ENCODE measurements at regions of chr4 and their contacts with region 1.

Region 1: DNA sequence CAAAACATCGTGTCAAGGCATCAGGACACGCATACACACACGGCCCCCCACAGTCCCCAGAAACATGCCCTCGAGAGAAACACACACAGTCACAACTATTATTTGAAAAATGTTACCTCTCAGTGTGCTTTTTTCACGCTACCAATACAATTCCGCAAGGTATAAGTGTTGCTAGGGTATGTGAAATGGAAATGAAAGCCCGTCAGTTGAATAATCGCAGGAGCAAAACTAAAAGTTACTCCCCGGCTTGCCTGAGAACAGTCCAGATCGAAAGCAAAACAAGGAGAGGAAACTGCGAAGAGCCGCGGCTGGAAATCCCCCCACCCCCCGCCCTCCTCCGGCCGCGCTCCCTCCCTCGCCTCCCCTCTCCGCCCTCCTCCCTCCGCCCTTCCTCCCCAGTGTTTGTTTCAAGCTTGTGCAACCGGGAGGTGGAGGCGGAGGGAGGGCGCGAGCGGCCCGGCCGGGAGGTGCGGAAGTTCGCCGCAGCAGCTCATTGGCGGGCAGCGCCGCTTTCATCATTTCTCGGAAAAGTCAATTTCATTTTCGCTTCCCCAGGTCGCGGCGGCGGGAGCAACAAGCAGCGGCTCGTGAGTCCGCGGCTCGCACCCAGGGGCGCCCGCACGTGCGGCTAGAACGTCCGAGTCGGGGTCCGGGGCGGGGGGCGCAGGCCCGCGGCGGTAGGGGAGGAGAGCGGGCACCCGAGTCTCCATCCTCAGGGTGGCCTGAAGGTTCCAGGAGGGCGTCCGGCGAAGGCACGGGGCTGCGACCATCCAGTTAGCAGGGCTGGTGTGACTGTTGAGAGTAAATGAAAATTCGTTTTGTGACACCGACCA is at the start of gene IRF2:
- DNase-seq: peak; percentile 98
- ATAC-seq: peak; percentile 82
- H3K4me3 ChIP-seq: peak within 1 kb of the TSS; percentile 92 to 100 (median 97)
- H3K4me3 Mint-ChIP-seq: peak within 1 kb of the TSS; percentile 96
- H3K27ac ChIP-seq: peak within 1 kb of the TSS; percentile 91 to 96
- H3K27ac Mint-ChIP-seq: peak within 1 kb of the TSS; percentile 95
- H3K4me1 ChIP-seq: peaks cover 53 to 54% of the 10 kb centered on the region in 2 donors
- H3K4me1 Mint-ChIP-seq: peaks cover 66% of the 10 kb centered on the region
- H3K27me3 ChIP-seq: no peaks in the 10 kb centered on the region
- H3K27me3 Mint-ChIP-seq: no peaks in the 10 kb centered on the region
- CTCF ChIP-seq: no peak
- total RNA-seq, gene IRF2: 68.2 and 68.4 TPM in 2 replicates

Region 2: DNA sequence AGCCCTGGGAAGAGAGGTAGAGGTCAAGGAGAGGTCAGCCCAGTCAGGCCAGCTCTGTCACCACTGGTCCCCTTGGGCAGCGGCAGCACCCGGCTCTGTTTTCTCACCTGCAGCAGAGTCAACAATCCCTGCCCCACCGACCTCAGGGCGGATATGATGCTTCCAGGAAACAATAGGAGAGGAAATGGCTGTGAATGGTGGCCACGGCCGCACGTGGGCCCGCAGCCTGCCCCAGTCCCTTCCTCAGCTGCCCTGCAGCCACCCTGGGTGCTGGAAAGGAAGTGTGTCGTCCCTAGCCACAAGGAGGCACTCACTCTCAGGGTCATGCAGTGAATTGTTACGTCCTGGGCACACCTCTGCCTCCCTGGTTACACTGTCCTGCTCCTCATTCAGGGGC is 164.3 kb before region 1 on chr4:
- CTCF ChIA-PET with region 1: interaction called, 5 read pairs
- POLR2A ChIA-PET with region 1: interaction called, 4 read pairs
- intact Hi-C with region 1: loop called (anchors 2 kb)
- DNase-seq: peak; percentile 71
- ATAC-seq: peak; percentile 21
- H3K4me3 ChIP-seq: no peak overlapping the region
- H3K4me3 Mint-ChIP-seq: peak overlapping the region; percentile 29
- H3K27ac ChIP-seq: no peak overlapping the region
- H3K27ac Mint-ChIP-seq: peak overlapping the region; percentile 56
- H3K4me1 ChIP-seq: peaks cover 46 to 48% of the 10 kb centered on the region in 2 donors
- H3K4me1 Mint-ChIP-seq: peaks cover 60% of the 10 kb centered on the region
- H3K27me3 ChIP-seq: no peaks in the 10 kb centered on the region
- H3K27me3 Mint-ChIP-seq: no peaks in the 10 kb centered on the region
- CTCF ChIP-seq: peak; percentile 58

Region 3: DNA sequence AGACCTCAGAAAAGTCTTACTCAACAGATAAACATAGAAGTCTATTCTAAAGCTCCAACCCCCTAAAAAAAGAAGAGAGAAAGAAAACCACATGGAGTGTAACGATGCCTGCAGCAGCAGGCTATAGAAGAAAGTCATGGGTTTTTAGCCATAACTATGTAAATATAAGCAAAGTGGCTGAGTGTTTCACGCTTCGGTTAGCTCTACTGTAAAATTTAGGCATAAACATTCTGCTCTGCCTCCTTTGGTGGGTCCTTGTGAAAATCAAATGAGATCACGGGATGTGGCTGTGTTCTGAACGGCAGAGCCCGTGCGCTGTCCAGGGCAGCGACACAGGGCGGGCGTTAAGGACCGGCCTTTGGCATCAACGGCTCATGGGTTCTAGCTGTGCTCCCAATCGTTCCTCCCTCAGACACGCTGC is 78.5 kb before region 1 on chr4:
- CTCF ChIA-PET with region 1: interaction called, 8 read pairs
- POLR2A ChIA-PET with region 1: no interaction called
- intact Hi-C with region 1: loop called (anchors 2 kb)
- DNase-seq: peak; percentile 87
- ATAC-seq: peak; percentile 90
- H3K4me3 ChIP-seq: peak overlapping the region in 4 of 5 experiments; percentile 10 to 44 (median 15)
- H3K4me3 Mint-ChIP-seq: peak overlapping the region; percentile 89
- H3K27ac ChIP-seq: peak overlapping the region; percentile 9 to 79
- H3K27ac Mint-ChIP-seq: peak overlapping the region; percentile 95
- H3K4me1 ChIP-seq: peaks cover 27 to 35% of the 10 kb centered on the region in 2 donors
- H3K4me1 Mint-ChIP-seq: peaks cover 44% of the 10 kb centered on the region
- H3K27me3 ChIP-seq: no peaks in the 10 kb centered on the region
- H3K27me3 Mint-ChIP-seq: no peaks in the 10 kb centered on the region
- CTCF ChIP-seq: peak; percentile 15

Region 4: GRCh38 chr4:184444953-184445309 is 29.5 kb before region 1 on chr4:
- CTCF ChIA-PET with region 1: interaction called, 5 read pairs
- POLR2A ChIA-PET with region 1: no interaction called
- intact Hi-C with region 1: loop called (anchors 2 kb)
- DNase-seq: peak; percentile 75
- ATAC-seq: peak; percentile 90
- H3K4me3 ChIP-seq: no peak overlapping the region
- H3K4me3 Mint-ChIP-seq: peak overlapping the region; percentile 58
- H3K27ac ChIP-seq: peak overlapping the region; percentile 25 to 62
- H3K27ac Mint-ChIP-seq: peak overlapping the region; percentile 47
- H3K4me1 ChIP-seq: peaks cover 80% of the 10 kb centered on the region in 2 donors
- H3K4me1 Mint-ChIP-seq: peaks cover 91% of the 10 kb centered on the region
- H3K27me3 ChIP-seq: no peaks in the 10 kb centered on the region
- H3K27me3 Mint-ChIP-seq: no peaks in the 10 kb centered on the region
- CTCF ChIP-seq: no peak

Region 5: DNA sequence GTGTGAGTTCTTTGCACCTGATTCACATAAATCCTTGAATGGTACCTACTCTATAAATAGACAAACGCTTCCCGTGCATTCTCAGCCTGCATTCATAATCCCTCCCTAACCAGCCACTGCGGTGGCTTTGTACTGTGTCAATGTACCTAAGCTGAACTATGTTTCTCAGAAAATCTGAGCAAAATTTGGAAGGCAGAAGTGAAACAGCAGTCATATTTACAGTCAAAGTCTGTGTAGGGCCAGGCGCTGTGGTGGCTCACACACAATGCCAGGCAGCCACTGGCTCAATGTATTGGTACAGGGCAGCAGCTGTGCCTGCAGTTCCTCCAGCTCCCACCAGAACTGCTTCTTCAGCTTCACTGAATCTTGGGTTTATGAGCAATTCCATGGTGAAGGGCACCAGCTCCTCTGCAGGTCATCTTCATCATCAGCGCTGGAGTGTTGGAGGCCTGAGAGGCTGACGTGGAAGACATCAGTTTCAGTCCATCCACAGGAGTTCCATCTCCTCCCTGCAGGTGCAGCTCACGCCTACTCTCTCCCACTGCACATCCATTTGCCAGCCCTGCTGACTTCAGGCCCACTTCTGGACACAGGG is 32.1 kb after region 1 on chr4:
- CTCF ChIA-PET with region 1: interaction called, 13 read pairs
- POLR2A ChIA-PET with region 1: interaction called, 7 read pairs
- intact Hi-C with region 1: loop called (anchors 1 kb)
- DNase-seq: peak; percentile 82
- ATAC-seq: peak; percentile 99
- H3K4me3 ChIP-seq: peak overlapping the region in 1 of 5 experiments; percentile 24
- H3K4me3 Mint-ChIP-seq: peak overlapping the region; percentile 61
- H3K27ac ChIP-seq: peak overlapping the region; percentile 48 to 69
- H3K27ac Mint-ChIP-seq: peak overlapping the region; percentile 81
- H3K4me1 ChIP-seq: peaks cover 43 to 48% of the 10 kb centered on the region in 2 donors
- H3K4me1 Mint-ChIP-seq: peaks cover 45% of the 10 kb centered on the region
- H3K27me3 ChIP-seq: no peaks in the 10 kb centered on the region
- H3K27me3 Mint-ChIP-seq: no peaks in the 10 kb centered on the region
- CTCF ChIP-seq: peak; percentile 73

Region 6: DNA sequence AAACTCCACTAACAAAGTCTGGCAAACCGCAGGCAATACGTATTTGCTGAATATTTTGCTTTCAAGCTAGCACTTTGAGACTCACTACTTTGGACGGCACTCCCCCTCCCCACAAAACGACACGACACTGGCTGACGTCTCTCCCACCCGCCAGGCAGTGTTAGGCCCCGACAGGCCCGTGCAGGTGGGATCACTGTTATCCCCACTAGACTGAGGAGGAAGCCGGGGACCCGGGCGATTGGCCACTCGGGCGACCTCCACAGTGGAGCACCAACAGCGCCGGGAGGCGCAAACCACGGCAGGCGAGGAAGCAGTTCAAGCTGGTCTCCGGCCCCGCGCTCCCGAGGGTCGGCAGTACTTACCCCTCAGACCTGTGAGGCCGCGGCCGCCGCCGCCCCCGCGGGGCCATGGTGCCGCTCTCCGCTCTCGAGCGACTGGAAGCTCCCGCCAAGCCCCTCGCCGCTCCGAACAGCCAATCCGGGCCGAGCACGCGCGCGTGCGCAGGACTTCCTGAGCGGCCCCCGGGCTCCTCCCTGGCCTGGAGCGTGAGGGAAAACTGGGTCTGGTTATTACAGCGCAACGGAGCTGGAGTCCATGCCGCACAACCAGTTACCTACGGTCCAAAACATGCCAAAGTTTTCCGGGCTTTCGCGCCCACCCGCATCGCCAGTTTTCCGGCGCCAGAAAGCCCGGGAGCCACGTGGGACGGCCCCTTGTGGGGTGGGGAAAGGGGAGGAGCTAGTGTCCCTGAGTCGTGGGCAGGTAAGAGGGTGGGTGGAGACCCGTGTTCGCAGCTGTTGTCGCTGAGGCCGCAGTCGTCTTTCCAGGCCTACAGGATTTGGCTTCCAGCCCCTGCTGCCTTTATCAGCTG is 259.4 kb after region 1 on chr4 and contains the start of gene CENPU:
- CTCF ChIA-PET with region 1: no interaction called
- POLR2A ChIA-PET with region 1: interaction called, 3 read pairs
- intact Hi-C with region 1: loop called (anchors 10 kb)
- DNase-seq: peak; percentile 96
- ATAC-seq: peak; percentile 95
- H3K4me3 ChIP-seq: peak within 1 kb of the TSS; percentile 65 to 76 (median 72)
- H3K4me3 Mint-ChIP-seq: peak within 1 kb of the TSS; percentile 93
- H3K27ac ChIP-seq: peak within 1 kb of the TSS; percentile 1 to 52
- H3K27ac Mint-ChIP-seq: peak within 1 kb of the TSS; percentile 93
- H3K4me1 ChIP-seq: peaks cover 7 to 12% of the 10 kb centered on the region in 2 donors
- H3K4me1 Mint-ChIP-seq: peaks cover 16% of the 10 kb centered on the region
- H3K27me3 ChIP-seq: no peaks in the 10 kb centered on the region
- H3K27me3 Mint-ChIP-seq: no peaks in the 10 kb centered on the region
- CTCF ChIP-seq: no peak
- total RNA-seq, gene CENPU: 1.6 and 3.2 TPM in 2 replicates